ENCODE measurements at regions of chr10 and their contacts with region 1.

Region 1: DNA sequence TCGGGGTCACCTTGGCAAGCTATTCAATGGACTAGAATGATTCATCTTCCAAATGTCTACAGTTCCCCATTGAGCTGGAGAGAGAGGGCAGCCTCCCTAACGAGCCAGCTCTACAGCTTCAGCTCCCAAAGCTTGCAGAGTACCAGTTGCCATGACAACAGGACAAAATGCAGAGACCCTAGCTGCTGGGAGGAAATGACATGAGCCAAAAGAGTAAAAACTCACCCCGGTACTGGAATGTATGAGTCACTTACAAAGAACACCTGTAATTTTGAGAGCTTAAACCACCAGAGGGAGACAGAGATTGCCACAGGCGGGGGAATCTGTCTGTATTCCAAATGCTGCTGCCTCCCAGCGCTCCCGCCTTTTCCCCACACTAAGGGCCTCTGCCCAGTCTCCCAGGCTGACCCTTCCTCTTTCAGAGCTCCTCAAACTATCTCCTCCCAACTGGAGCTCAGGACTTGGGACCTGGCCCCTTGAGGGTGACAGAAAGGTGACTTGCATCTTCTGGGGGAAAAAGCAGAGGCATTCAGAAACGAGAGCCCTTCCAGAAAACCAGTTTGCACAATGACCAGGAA is 95.5 kb downstream of the CUL2 start:
- DNase-seq: peak; percentile 100
- ATAC-seq: peak; percentile 84
- H3K4me3 ChIP-seq: no peak overlapping the region
- H3K27ac ChIP-seq: 0 out of 2 replicates have a peak overlapping the region, but pooled peaks have one; percentile 1
- H3K4me1 ChIP-seq: peaks cover 33% of the 10 kb centered on the region
- H3K27me3 ChIP-seq: no peaks in the 10 kb centered on the region
- CTCF ChIP-seq: peak; percentile 100

Region 2: DNA sequence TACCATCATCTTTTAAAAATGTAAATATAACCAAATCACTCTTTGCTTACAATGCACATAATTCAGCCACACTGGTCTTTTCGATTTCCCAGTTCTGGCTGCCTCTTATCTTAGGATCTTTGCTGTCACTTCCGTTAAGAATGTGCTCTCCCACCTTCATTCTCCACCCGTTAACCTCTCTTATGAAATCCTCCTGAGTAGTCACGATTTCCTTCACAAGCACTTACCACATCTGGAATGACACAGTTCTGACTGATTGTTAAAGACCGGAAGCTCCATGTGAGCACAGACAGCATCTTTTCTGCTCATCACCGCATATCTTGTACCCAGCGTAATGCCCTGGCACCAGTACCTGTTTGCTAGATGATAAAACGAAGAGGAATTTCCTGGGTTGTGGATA is 11.2 kb after region 1 on chr10:
- CTCF ChIA-PET with region 1: interaction called, 38 read pairs
- POLR2A ChIA-PET with region 1: interaction called, 5 read pairs
- intact Hi-C with region 1: loop called (anchors 1 kb)
- DNase-seq: peak; percentile 100
- ATAC-seq: peak; percentile 81
- H3K4me3 ChIP-seq: no peak overlapping the region
- H3K27ac ChIP-seq: peak overlapping the region; percentile 82
- H3K4me1 ChIP-seq: peaks cover 52% of the 10 kb centered on the region
- H3K27me3 ChIP-seq: no peaks in the 10 kb centered on the region
- CTCF ChIP-seq: no peak

Region 3: GRCh38 chr10:35027567-35027966 is 32.9 kb after region 1 on chr10:
- CTCF ChIA-PET with region 1: interaction called, 124 read pairs
- POLR2A ChIA-PET with region 1: interaction called, 9 read pairs
- intact Hi-C with region 1: loop called (anchors 1 kb)
- DNase-seq: peak; percentile 88
- ATAC-seq: peak; percentile 8; the same call in 1 of the 2 replicates
- H3K4me3 ChIP-seq: no peak overlapping the region
- H3K27ac ChIP-seq: no peak overlapping the region
- H3K4me1 ChIP-seq: peaks cover 16% of the 10 kb centered on the region
- H3K27me3 ChIP-seq: no peaks in the 10 kb centered on the region
- CTCF ChIP-seq: peak; percentile 96

Region 4: GRCh38 chr10:35112571-35112970 is 117.9 kb after region 1 on chr10:
- CTCF ChIA-PET with region 1: interaction called, 13 read pairs
- POLR2A ChIA-PET with region 1: no interaction called
- intact Hi-C with region 1: no loop called
- DNase-seq: no peak
- ATAC-seq: no peak
- H3K4me3 ChIP-seq: no peak overlapping the region
- H3K27ac ChIP-seq: no peak overlapping the region
- H3K4me1 ChIP-seq: no peaks in the 10 kb centered on the region
- H3K27me3 ChIP-seq: no peaks in the 10 kb centered on the region
- CTCF ChIP-seq: no peak

Region 5: GRCh38 chr10:35218339-35218955 is 223.8 kb after region 1 on chr10:
- CTCF ChIA-PET with region 1: interaction called, 7 read pairs
- POLR2A ChIA-PET with region 1: no interaction called
- intact Hi-C with region 1: loop called (anchors 1 kb)
- DNase-seq: peak; percentile 100
- ATAC-seq: peak; percentile 86
- H3K4me3 ChIP-seq: peak overlapping the region; percentile 5; the same call in 1 of the 2 replicates
- H3K27ac ChIP-seq: no peak overlapping the region
- H3K4me1 ChIP-seq: no peaks in the 10 kb centered on the region
- H3K27me3 ChIP-seq: no peaks in the 10 kb centered on the region
- CTCF ChIP-seq: peak; percentile 100

Measured in PC-3 (cell line).